ENCODE measurements at regions of chr1 and their contacts with region 1.

Region 1: DNA sequence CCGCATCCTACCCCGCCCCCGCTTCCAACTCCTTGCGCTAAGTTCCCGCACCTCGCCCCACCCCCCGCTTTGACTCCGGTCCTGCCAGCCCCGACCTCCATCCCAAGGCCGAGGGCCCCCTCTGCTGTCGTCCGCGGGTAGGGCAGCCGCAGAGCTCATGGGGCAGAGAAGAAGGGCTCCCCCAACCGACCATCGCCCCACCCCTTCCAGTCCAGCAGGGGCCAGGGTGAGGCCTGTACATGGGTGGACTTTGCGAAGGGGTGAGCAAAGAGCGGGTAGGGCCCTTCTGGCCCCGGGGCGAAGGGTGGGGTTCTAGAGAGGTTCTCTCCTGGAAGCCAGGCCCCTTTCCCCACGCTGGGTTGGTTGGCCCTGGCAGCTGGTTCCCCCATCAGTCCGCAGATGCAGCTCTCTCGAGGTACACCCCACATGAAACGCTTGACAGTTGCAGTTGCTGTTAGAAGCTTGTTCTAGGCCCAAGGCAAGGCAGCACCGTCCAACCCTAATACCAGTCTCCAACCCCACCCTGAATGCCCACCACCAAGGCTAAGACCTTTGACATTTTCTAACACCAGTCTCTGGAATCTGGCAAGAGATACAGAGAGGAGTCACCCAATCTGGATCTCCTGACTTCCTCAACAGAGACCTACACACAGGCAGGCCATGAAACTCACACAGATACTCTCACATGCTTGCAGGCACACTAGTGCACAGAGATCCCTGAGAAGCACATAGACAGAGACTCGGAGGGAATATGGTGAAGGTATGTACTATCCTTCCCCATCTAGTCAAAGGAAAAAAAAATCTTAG is 25.3 kb upstream of the ADGRB2 start:
- DNase-seq: peak; percentile 98
- H3K4me3 Mint-ChIP-seq: peak overlapping the region; percentile 80
- H3K27ac Mint-ChIP-seq: no peak overlapping the region
- H3K4me1 Mint-ChIP-seq: peaks cover 13% of the 10 kb centered on the region
- H3K27me3 Mint-ChIP-seq: no peaks in the 10 kb centered on the region

Region 2: DNA sequence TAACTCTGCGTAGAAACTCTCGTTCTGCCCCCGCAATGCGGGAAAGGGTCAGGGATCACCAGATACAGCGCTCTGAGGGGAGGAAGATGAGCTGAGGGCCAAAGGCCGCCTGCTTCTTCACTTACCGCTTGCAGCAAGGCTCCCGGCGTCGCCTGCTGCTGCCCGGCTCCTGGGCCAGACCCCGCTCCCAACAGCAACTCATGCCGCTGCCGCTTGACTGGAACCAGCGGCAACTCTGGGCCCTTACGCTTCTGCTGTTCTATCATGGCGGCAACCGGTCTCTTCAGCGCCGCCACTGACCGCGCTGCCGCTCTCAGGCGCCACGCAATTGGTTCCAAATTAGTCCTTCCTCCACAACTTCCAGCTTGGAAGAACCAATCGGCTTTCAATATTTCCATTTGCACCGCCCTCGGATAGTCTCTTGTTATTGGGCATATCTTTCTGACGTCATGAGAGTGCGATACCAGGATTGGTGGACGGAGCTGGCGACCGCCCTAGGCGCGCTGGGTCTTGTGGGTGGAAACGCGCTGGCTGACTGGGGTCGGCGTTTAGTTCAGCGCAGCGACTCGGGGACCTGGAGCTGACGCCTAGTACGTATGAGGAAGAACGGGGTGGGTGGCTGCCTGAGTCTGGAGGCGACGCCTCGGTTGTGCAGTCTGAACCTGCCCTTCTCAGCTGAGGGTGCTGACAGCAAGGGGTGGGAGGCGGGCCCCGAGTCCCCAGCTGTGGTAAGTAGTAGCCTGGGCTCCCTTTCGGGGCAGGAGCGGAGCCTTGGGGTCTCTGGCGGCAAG is 492.8 kb before region 1 on chr1 and contains the starts of genes SNRNP40 and ZCCHC17:
- CTCF ChIA-PET with region 1: no interaction called
- POLR2A ChIA-PET with region 1: no interaction called
- intact Hi-C with region 1: loop called (anchors 2 kb)
- DNase-seq: peak; percentile 95
- H3K4me3 Mint-ChIP-seq: no peak within 1 kb of the TSS
- H3K27ac Mint-ChIP-seq: no peak within 1 kb of the TSS
- H3K4me1 Mint-ChIP-seq: peaks cover 32% of the 10 kb centered on the region
- H3K27me3 Mint-ChIP-seq: no peaks in the 10 kb centered on the region
- total RNA-seq, gene SNRNP40: 83.7 to 96.4 TPM
- total RNA-seq, gene ZCCHC17: 24.4 to 29.6 TPM

Region 3: GRCh38 chr1:31483012-31483946 is 306.2 kb before region 1 on chr1:
- CTCF ChIA-PET with region 1: no interaction called
- POLR2A ChIA-PET with region 1: no interaction called
- intact Hi-C with region 1: no loop called
- DNase-seq: no peak
- H3K4me3 Mint-ChIP-seq: no peak overlapping the region
- H3K27ac Mint-ChIP-seq: no peak overlapping the region
- H3K4me1 Mint-ChIP-seq: peaks cover 12% of the 10 kb centered on the region
- H3K27me3 Mint-ChIP-seq: peaks cover 6% of the 10 kb centered on the region

Region 4: DNA sequence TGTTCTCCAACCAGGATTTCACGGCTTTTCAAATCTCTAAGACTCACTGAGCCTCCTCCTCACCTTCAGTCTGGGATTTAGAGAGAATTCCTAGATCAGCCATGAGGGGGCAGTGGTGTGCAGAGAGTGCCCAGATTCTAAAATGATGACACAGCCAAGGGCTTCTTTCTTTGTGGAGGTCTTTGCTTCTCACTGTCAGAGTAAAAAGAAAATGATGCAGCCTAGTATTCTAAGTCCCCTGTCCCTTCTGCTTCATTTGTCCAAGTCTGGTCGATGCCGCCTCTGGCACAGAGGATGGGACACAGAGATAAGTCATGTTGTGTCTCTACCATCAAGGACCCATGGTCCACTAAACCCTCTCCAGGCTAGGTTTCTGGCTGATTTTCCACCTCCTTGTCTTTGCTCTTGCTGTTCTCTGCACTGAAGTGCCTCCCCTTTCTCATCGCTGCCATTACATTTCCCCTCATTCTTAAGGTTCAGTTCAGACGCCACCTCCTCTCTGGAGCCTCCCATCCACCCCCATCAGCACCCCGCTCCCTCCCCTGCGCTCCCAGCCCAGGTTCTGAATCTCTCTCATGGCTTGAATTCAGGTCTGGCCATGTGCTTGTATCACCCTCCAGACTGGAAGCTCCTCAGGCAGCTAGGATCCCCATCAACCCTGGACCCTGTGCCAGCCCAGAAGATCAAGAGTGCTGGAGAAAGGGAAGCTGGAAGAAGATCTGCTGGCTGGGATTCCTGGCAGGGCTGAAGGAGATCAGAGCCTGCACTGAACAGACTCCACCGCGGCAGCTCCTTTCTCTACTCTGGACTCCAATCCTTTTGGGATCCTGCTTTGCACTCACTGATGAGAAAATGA is 225.1 kb before region 1 on chr1:
- CTCF ChIA-PET with region 1: interaction called, 36 read pairs
- POLR2A ChIA-PET with region 1: no interaction called
- intact Hi-C with region 1: loop called (anchors 5 kb)
- DNase-seq: peak; percentile 65
- H3K4me3 Mint-ChIP-seq: no peak overlapping the region
- H3K27ac Mint-ChIP-seq: no peak overlapping the region
- H3K4me1 Mint-ChIP-seq: no peaks in the 10 kb centered on the region
- H3K27me3 Mint-ChIP-seq: peaks cover 21% of the 10 kb centered on the region

Region 5: DNA sequence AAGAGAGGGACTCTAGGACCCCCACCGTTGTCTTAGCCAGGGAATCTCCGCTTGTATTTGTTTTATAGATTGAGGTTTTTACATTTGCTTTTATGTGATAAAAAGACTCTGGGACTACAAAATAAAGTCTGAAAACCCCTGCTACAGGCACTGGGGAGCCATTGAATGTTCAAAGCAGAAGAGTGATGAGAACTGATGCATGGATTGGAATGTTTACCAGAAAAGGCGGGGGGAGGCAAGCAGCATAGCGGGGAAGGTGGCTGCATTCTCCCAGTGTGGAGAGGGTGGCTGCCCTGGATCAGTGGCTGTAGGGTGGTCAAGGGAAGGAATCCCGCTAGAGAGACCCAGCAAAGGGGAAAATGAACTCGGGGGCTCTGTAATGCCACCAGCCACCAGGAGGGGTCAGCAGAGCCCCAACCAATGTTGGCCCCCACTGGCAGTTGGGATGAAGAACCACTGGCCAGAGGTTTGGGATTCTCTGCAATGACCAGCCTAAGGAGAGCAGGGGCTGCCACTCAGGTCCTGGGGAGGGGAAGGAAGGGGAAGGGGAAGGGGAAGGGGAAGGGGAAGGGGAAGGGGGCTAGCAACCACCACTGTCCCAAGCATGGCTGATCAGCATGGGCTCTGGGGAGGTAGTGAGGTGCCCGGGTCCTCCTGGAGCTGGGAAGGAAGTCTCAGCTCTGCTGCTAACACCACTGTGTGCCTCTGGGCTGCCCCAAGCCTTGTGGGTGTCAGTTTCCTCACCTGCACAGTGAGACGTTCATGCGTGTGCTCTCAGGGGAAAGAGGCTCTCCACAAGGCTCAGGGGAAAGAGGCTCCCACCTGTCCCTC is 125.6 kb before region 1 on chr1:
- CTCF ChIA-PET with region 1: interaction called, 139 read pairs
- POLR2A ChIA-PET with region 1: interaction called, 8 read pairs
- intact Hi-C with region 1: loop called (anchors 1 kb)
- DNase-seq: peak; percentile 69
- H3K4me3 Mint-ChIP-seq: no peak overlapping the region
- H3K27ac Mint-ChIP-seq: no peak overlapping the region
- H3K4me1 Mint-ChIP-seq: no peaks in the 10 kb centered on the region
- H3K27me3 Mint-ChIP-seq: peaks cover 3% of the 10 kb centered on the region

Region 6: GRCh38 chr1:31715087-31715872 is 74.2 kb before region 1 on chr1:
- CTCF ChIA-PET with region 1: interaction called, 66 read pairs
- POLR2A ChIA-PET with region 1: no interaction called
- intact Hi-C with region 1: loop called (anchors 1 kb)
- DNase-seq: peak; percentile 63
- H3K4me3 Mint-ChIP-seq: peak overlapping the region; percentile 39
- H3K27ac Mint-ChIP-seq: no peak overlapping the region
- H3K4me1 Mint-ChIP-seq: peaks cover 11% of the 10 kb centered on the region
- H3K27me3 Mint-ChIP-seq: peaks cover 41% of the 10 kb centered on the region

Region 7: DNA sequence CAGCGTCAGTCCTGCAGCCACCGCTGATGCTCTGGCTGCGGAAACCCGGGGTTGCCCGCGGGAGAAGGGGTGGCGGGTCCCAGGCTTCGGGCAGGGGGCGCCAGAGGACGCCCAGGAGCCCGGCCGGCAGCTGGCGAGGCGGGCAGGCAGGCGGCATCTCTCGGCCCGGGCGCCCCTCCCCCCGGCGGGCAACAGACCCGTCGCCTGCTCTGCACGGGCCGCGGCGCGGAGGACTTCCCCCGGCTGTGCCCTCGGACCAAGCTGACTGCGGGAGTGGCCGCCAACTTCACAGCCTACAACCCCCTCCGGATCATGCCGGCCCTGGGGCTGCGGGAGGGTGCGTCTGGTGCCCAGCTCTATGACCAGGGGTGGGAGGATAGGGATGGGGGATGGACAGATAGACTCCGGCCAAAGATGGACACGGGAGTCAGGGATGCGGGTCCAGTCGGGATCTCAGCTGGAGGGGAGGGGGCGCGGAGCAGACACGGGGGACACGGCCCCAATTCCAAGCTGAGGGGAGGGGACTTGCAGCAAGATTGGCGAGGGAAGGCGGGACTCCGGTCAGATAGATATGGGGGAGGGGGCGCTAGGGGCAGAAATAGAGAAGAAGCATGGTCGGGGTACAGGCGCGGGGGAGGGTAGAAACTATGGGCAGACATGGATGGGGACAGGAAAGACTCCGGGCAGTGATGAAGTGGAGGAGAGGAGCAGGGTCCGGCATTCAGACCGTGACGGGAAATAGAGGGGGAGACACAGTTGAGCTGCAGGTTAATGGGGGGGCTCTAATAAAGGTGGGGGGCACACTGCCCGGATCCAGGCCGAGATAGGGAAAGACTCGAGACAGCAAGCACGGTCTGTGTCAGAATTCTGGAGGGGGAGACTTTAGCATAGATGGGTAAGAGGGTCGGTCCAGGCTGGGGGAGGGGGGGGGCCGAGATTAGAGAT is 26.5 kb before region 1 on chr1:
- CTCF ChIA-PET with region 1: interaction called, 51 read pairs
- POLR2A ChIA-PET with region 1: interaction called, 6 read pairs
- intact Hi-C with region 1: loop called (anchors 1 kb)
- DNase-seq: peak; percentile 82
- H3K4me3 Mint-ChIP-seq: peak overlapping the region; percentile 64
- H3K27ac Mint-ChIP-seq: no peak overlapping the region
- H3K4me1 Mint-ChIP-seq: peaks cover 20% of the 10 kb centered on the region
- H3K27me3 Mint-ChIP-seq: peaks cover 9% of the 10 kb centered on the region

Region 8: GRCh38 chr1:31955917-31956736 is 166.7 kb after region 1 on chr1:
- CTCF ChIA-PET with region 1: interaction called, 10 read pairs
- POLR2A ChIA-PET with region 1: no interaction called
- intact Hi-C with region 1: no loop called
- DNase-seq: peak; percentile 94
- H3K4me3 Mint-ChIP-seq: peak overlapping the region; percentile 55
- H3K27ac Mint-ChIP-seq: peak overlapping the region; percentile 90
- H3K4me1 Mint-ChIP-seq: peaks cover 59% of the 10 kb centered on the region
- H3K27me3 Mint-ChIP-seq: no peaks in the 10 kb centered on the region

Measured in activated CD4-positive, alpha-beta memory T cell treated with anti-CD3 and anti-CD28 coated beads for 36 hours (primary cell).